AG04449 (cell line): ENCODE measurements at regions of chr12 and their contacts with region 1.

Region 1: DNA sequence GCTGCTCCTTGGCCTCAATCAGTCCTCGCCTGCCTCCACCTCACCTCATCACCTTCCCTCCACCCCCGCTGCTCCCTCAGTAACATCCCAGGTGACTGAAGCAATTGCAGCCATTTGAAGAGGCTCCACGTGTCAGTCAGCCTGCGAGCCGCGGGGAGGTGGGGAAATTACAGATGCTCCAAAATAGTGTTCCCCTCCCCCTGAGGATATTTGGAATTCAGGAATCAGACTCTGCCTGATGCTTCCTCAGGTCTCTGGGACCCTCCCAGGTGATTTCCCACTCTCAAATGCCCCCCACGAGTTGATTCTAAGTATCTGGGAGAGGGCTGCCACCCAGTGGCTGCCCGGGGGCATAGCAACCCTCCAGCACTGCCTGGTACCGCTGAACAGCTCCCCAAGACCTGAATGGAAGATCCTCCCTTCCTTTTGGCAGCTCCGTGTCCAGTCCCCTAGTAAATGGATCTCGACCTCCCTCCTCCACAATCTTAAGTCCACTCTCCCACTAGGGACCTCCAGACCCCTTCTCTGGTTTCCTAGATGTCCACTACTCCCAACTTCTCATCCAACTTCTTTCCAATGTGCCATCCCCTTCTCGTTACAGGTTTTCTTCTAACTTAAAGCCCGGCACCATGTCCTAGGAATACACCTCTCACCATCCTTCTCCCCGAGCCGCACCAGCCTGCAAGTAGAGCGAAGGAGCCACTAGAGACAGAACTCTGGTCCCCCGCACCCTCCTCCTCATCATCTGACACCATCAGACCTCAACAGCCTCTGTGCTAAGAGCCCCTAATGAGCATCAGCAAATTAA is 1.4 kb upstream of the ASIC1 start:
- DNase-seq: no peak
- H3K4me3 ChIP-seq: peak overlapping the region; percentile 29
- CTCF ChIP-seq: peak; percentile 88

Region 2: GRCh38 chr12:49872781-49873181 is 183.3 kb before region 1 on chr12:
- CTCF ChIA-PET with region 1: interaction called, 22 read pairs
- POLR2A ChIA-PET with region 1: no interaction called
- DNase-seq: no peak
- H3K4me3 ChIP-seq: no peak overlapping the region
- CTCF ChIP-seq: no peak

Region 3: GRCh38 chr12:49983892-49984291 is 72.1 kb before region 1 on chr12:
- CTCF ChIA-PET with region 1: interaction called, 1,042 read pairs
- POLR2A ChIA-PET with region 1: no interaction called
- DNase-seq: peak; percentile 45
- H3K4me3 ChIP-seq: no peak overlapping the region; the same call in 1 of the 2 replicates
- CTCF ChIP-seq: no peak

Region 4: GRCh38 chr12:50016501-50017475 is 39.2 kb before region 1 on chr12:
- CTCF ChIA-PET with region 1: interaction called, 13 read pairs
- POLR2A ChIA-PET with region 1: no interaction called
- DNase-seq: no peak
- H3K4me3 ChIP-seq: no peak overlapping the region
- CTCF ChIP-seq: no peak

Region 5: GRCh38 chr12:50066433-50066832 is 10.4 kb after region 1 on chr12:
- CTCF ChIA-PET with region 1: interaction called, 96 read pairs
- POLR2A ChIA-PET with region 1: no interaction called
- DNase-seq: peak; percentile 84
- H3K4me3 ChIP-seq: no peak overlapping the region
- CTCF ChIP-seq: no peak

Region 6: DNA sequence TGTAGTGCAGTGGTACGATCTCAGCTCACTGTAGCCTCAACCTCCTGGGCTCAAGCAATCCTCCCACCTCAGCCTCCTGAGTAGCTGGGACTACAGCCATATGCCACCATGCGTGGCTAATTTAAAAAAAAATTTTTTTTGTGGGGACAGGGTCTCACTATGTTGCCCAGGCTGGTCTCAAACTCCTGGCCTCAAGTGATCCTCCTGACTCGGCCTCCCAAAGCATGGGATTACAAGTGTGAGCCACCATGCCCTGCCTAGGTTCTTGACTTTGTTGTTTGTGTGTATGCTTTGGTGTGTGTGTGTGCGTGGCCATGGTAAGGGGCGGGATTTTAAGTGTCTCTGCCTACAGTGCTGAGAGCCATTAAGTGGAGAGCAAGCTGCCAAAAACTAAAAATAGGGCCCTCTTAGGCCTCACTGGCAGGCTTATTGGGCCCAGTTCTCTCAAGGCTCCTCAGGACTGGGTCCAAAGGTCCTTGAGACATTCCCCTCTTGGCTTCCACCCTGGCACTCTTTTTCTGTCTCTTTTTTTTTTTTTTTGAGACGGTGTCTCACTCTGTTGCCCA is 61.1 kb after region 1 on chr12:
- CTCF ChIA-PET with region 1: no interaction called
- POLR2A ChIA-PET with region 1: no interaction called
- DNase-seq: no peak
- H3K4me3 ChIP-seq: no peak overlapping the region
- CTCF ChIP-seq: no peak